ENCODE measurements at regions of chr19 and their contacts with region 1.

Region 1: GRCh38 chr19:3618144-3618810 is 8.3 kb downstream of the CACTIN start:
- DNase-seq: no peak
- ATAC-seq: peak; percentile 83
- H3K4me3 ChIP-seq: no peak overlapping the region
- H3K27ac ChIP-seq: no peak overlapping the region
- H3K4me1 ChIP-seq: no peaks in the 10 kb centered on the region
- H3K27me3 ChIP-seq: no peaks in the 10 kb centered on the region
- CTCF ChIP-seq: peak; percentile 71 to 91 (median 90); a peak in 5 of 6 replicates
- POLR2A ChIP-seq: no peak
- RAD21 ChIP-seq: peak; percentile 86

Region 2: DNA sequence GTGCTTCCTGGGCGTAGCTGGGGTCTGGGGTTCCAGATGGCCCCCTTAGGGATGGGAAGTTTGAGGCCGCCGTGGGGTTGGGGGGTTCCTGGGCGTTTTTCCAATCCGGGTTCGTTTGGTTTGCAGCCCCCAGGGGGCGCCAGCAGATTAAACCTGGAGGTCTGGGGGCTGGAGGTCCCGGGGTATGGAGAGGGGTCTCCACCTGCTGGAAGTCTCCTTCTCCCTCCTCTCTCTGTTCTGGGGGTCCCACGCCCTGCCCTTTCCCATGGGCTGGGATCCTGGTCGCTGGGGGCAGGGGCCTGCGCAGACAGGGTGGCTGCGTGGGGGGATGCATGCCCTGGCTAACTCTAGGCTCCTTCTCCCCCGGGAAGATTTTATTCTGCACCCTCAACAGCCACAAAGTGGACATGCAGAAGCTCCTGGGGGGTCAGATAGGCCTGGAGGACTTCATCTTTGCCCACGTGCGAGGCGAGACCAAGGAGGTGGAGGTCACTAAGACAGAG is 32.1 kb before region 1 on chr19:
- CTCF ChIA-PET with region 1: no interaction called
- POLR2A ChIA-PET with region 1: no interaction called
- RAD21 ChIA-PET with region 1: no interaction called
- intact Hi-C with region 1: loop called (anchors 1 kb)
- DNase-seq: no peak
- ATAC-seq: peak; percentile 44
- H3K4me3 ChIP-seq: no peak overlapping the region
- H3K27ac ChIP-seq: no peak overlapping the region
- H3K4me1 ChIP-seq: peaks cover 0 to 11% of the 10 kb centered on the region in 2 experiments; a peak in 2 of 4 replicates
- H3K27me3 ChIP-seq: no peaks in the 10 kb centered on the region
- CTCF ChIP-seq: peak; percentile 54 to 66 (median 65); a peak in 5 of 6 replicates
- POLR2A ChIP-seq: no peak
- RAD21 ChIP-seq: peak; percentile 73